HepG2 (cell line): ENCODE measurements at regions of chr13 and their contacts with region 1.

Region 1: GRCh38 chr13:33125821-33126570 is 109.8 kb downstream of the KL start:
- DNase-seq: peak; percentile 99
- ATAC-seq: peak; percentile 100
- H3K4me3 ChIP-seq: peak overlapping the region in 1 of 3 experiments; percentile 18; a peak in 1 of 6 replicates
- H3K27ac ChIP-seq: peak overlapping the region; percentile 94
- H3K4me1 ChIP-seq: peaks cover 57% of the 10 kb centered on the region
- H3K27me3 ChIP-seq: no peaks in the 10 kb centered on the region
- CTCF ChIP-seq: 0 out of 2 replicates have a peak, but pooled peaks have one; percentile 4
- EP300 ChIP-seq: peak; percentile 69 to 94
- POLR2A ChIP-seq: no peak
- RAD21 ChIP-seq: peak; percentile 35; the same call in 1 of the 2 replicates

Region 2: GRCh38 chr13:33158820-33159219 is 32.8 kb after region 1 on chr13:
- CTCF ChIA-PET with region 1: no interaction called
- POLR2A ChIA-PET with region 1: no interaction called
- in situ Hi-C with region 1: no loop called
- intact Hi-C with region 1: no loop called
- DNase-seq: no peak
- ATAC-seq: no peak
- H3K4me3 ChIP-seq: no peak overlapping the region
- H3K27ac ChIP-seq: no peak overlapping the region
- H3K4me1 ChIP-seq: peaks cover 11% of the 10 kb centered on the region
- H3K27me3 ChIP-seq: no peaks in the 10 kb centered on the region
- CTCF ChIP-seq: no peak
- EP300 ChIP-seq: no peak
- POLR2A ChIP-seq: no peak
- RAD21 ChIP-seq: no peak

Region 3: GRCh38 chr13:33169273-33169980 is 43.4 kb after region 1 on chr13:
- CTCF ChIA-PET with region 1: no interaction called
- POLR2A ChIA-PET with region 1: interaction called, 9 read pairs
- in situ Hi-C with region 1: no loop called
- intact Hi-C with region 1: loop called (anchors 5 kb)
- DNase-seq: no peak
- ATAC-seq: no peak; the same call in 2 of the 3 replicates
- H3K4me3 ChIP-seq: peak overlapping the region in 1 of 3 experiments; percentile 30; a peak in 1 of 6 replicates
- H3K27ac ChIP-seq: peak overlapping the region; percentile 85
- H3K4me1 ChIP-seq: peaks cover 65% of the 10 kb centered on the region
- H3K27me3 ChIP-seq: no peaks in the 10 kb centered on the region
- CTCF ChIP-seq: no peak
- EP300 ChIP-seq: no peak
- POLR2A ChIP-seq: no peak
- RAD21 ChIP-seq: no peak

Region 4: DNA sequence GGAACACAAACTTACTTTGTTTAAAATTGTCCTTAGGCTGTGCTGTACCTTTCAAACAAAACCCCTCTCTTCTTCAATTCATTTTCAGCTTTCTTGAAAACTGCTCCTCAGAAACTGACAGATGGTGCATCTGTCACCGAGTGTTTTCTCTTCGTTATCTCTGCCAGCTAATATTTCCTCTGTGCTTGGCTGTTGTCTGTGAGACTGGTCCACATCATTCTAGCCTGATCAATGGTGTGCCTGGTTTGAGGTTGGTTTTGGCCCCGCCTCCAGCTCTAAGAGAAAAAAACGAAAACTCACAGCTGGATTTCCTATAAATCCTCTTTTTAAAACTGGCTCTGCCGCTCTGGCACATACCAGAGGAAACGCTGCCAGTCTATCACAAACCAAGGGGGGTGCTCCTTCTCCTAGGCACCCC is 79.8 kb after region 1 on chr13:
- CTCF ChIA-PET with region 1: no interaction called
- POLR2A ChIA-PET with region 1: no interaction called
- in situ Hi-C with region 1: no loop called
- intact Hi-C with region 1: loop called (anchors 5 kb)
- DNase-seq: no peak
- ATAC-seq: no peak
- H3K4me3 ChIP-seq: no peak overlapping the region
- H3K27ac ChIP-seq: no peak overlapping the region
- H3K4me1 ChIP-seq: peaks cover 33% of the 10 kb centered on the region
- H3K27me3 ChIP-seq: no peaks in the 10 kb centered on the region
- CTCF ChIP-seq: no peak
- EP300 ChIP-seq: no peak
- POLR2A ChIP-seq: no peak
- RAD21 ChIP-seq: no peak